A549 (cell line): ENCODE measurements at regions of chr5 and their contacts with region 1.

Region 1: DNA sequence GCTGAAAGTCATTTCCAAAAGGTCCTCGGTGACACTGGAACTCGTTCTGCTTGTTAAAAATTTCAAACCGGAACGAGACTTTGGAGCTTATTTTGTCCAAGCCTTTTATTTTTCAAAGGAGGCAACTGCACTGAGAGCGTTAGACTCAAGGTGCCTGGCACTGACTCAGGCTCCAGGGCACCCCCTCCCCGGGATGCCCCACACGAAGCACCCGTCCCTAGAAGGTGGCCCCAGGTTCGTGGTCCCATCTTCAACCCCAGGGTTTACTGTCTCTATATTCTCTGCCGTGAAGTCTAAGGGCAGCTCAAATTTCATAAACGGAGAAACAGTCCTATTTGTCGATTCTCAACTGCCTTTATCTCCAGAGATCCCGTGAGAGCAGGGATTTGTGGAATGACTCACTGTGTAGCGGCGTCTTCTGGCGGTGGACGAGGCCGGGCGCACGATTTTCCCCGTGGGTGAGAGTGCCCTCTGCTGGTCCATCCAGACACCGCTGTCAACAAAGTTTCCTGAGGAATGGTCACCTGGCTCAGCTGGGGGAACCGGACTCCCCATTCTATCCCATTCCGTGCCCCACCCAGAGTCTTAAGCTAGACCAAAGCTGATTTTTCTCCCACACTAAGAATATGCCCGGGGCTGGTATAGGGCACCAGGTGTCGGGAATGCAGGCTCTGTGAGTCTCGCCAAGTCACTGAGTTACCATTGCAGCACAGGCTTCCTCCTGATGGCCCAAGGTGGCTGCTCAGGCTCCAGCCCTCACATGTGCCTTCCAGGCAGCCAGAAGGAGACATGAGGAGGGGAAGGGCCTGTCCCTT is 27.1 kb upstream of the SLC6A19 start:
- DNase-seq: peak; percentile 79 to 87
- ATAC-seq: peak; percentile 83 to 91
- H3K4me3 ChIP-seq: peak overlapping the region; percentile 33; the same call in 2 of the 3 replicates
- H3K27ac ChIP-seq: peak overlapping the region; percentile 73 to 74
- H3K4me1 ChIP-seq: peaks cover 5% of the 10 kb centered on the region
- CTCF ChIP-seq: peak; percentile 81
- EP300 ChIP-seq: no peak
- POLR2A ChIP-seq: no peak
- RAD21 ChIP-seq: peak; percentile 72 to 73

Region 2: DNA sequence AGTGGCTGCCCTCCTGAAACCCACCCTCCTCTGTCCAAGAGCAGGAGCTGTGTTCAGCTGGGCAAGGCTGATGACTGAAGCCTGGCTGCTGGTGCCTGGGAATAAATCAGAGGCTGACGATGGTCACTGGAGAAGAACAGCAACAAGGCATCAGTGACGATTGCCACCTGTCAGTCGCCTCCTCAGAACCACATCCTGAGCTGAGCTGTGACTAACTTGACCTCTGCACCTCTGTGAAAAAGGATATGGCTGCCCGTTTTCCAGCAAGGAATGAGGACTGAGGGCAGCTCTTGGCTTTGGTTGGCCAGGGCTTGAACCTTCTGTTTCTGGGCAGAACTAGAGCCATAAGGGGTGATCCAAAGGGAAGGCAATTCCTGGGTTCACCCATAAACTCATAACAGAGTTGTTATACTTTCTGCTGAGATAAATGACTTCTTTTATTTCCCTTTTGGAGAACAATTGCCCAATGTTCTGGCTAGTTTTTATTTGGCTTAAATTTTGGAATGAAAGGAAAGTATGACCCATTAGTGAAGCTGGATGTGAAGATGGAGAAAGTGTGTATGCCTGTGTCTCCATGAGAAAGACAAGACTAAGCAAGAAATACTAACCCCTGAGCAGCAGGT is 241.6 kb before region 1 on chr5:
- CTCF ChIA-PET with region 1: interaction called, 14 read pairs
- POLR2A ChIA-PET with region 1: no interaction called
- DNase-seq: no peak
- ATAC-seq: no peak
- H3K4me3 ChIP-seq: no peak overlapping the region
- H3K27ac ChIP-seq: no peak overlapping the region
- H3K4me1 ChIP-seq: no peaks in the 10 kb centered on the region
- CTCF ChIP-seq: no peak
- EP300 ChIP-seq: no peak
- POLR2A ChIP-seq: no peak
- RAD21 ChIP-seq: no peak

Region 3: GRCh38 chr5:1152156-1152555 is 22.2 kb before region 1 on chr5:
- CTCF ChIA-PET with region 1: interaction called, 49 read pairs
- POLR2A ChIA-PET with region 1: no interaction called
- DNase-seq: no peak
- ATAC-seq: no peak
- H3K4me3 ChIP-seq: no peak overlapping the region
- H3K27ac ChIP-seq: no peak overlapping the region
- H3K4me1 ChIP-seq: peaks cover 8% of the 10 kb centered on the region; the same call in 1 of the 3 replicates
- CTCF ChIP-seq: no peak
- EP300 ChIP-seq: no peak
- POLR2A ChIP-seq: no peak
- RAD21 ChIP-seq: no peak

Region 4: GRCh38 chr5:1161833-1162229 is 12.5 kb before region 1 on chr5:
- CTCF ChIA-PET with region 1: interaction called, 39 read pairs
- POLR2A ChIA-PET with region 1: no interaction called
- DNase-seq: no peak
- ATAC-seq: peak in 1 of 2 experiments; percentile 14; a peak in 3 of 6 replicates
- H3K4me3 ChIP-seq: no peak overlapping the region
- H3K27ac ChIP-seq: peak overlapping the region; percentile 28 to 49; a peak in 4 of 6 replicates
- H3K4me1 ChIP-seq: peaks cover 15% of the 10 kb centered on the region; the same call in 2 of the 3 replicates
- CTCF ChIP-seq: no peak
- EP300 ChIP-seq: no peak
- POLR2A ChIP-seq: no peak
- RAD21 ChIP-seq: no peak

Region 5: DNA sequence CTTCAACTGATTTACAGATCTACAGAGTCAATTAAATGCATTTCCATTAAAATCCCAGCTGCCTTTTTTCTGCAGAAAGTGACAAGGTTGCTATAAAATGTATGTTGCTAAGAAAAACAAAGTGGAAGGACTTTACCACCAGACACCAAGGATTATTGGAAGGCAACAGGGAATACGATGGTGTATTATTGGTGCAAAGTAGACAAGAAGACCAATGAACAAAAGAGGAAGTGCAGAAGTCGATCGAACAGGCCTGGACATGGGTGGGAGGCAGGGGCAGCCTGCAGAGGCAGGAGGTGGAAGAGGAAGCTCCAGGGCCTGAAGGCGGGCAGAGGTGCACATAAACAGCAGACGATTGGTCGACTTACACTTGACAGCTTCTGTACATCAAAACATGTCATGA is 16.5 kb after region 1 on chr5:
- CTCF ChIA-PET with region 1: interaction called, 91 read pairs
- POLR2A ChIA-PET with region 1: no interaction called
- DNase-seq: no peak
- ATAC-seq: no peak
- H3K4me3 ChIP-seq: no peak overlapping the region
- H3K27ac ChIP-seq: no peak overlapping the region
- H3K4me1 ChIP-seq: no peaks in the 10 kb centered on the region
- CTCF ChIP-seq: no peak
- EP300 ChIP-seq: no peak
- POLR2A ChIP-seq: no peak
- RAD21 ChIP-seq: no peak

Region 6: DNA sequence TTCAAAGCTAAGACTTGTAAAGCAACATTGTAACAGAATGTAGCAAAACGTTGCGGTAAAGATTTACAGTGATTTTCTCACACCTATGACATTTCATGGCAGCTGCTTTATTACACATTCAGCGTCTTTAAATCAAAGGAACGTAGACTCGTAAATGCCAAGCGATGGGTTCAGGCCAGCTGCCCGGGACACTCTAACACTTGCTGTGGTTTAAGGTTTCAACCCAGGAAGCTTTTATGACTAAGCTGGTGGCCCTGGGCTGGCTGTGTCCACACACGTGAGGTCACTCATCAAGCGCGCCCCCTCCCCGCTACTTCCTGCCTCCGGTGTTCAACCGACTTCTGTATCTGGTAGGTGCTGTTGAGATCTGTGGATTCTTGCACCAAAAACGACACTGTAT is 53.3 kb after region 1 on chr5:
- CTCF ChIA-PET with region 1: no interaction called
- POLR2A ChIA-PET with region 1: no interaction called
- DNase-seq: no peak
- ATAC-seq: no peak
- H3K4me3 ChIP-seq: no peak overlapping the region
- H3K27ac ChIP-seq: no peak overlapping the region
- H3K4me1 ChIP-seq: no peaks in the 10 kb centered on the region
- CTCF ChIP-seq: no peak
- EP300 ChIP-seq: no peak
- POLR2A ChIP-seq: no peak
- RAD21 ChIP-seq: no peak